Activated T-helper 1 cell treated with anti-CD3 and anti-CD28 coated beads, Interleukin-12 subunit alpha, Interleukin-12 subunit beta, Interleukin-2, Interleukin-4 antibody, amounts not matched to agents 30 ng/mL and 10 ng/mL and 1 ng/mL, durations not matched to agents 14 hours and 24 hours and 36 hours (primary cell): ENCODE measurements at regions of chr11 and their contacts with region 1.

Region 1: DNA sequence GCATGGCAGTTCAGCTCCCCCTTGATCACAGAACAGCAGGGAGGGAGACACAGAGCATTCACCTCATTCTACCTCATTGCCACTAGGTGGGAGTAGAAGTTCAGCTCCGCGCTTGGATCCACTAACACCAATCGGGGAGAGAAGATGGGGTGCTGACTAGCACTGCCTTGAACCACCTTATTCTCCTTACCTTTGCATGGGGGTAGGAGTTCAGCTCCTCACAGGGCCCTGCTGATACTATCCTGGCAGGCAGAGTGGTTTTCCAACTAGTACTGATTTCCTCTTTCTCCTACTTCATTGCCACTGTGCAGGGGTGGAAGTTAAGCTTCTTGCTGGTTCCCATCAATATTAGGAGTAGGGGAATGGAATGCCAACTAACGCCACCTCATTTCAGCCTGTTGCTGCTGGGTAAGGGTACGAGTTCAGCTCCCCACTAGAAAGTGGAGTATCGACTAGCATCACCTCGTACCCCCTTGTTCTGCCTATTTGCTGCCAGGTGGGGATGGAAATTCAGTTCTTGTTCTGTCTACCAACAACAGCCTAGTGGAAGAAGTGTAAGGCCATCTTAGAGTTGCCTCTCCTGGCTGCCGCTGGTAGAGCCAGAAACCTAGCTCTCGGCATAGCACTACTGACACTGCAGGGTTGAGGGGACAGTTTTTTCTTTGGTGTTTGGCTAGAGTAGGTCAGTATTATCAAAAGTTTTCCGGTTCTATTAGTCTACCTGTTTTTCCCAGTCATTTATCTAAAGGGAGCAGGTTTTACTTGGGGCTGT is 550.9 kb upstream of the CCDC90B start:
- DNase-seq: no peak
- H3K4me3 Mint-ChIP-seq: no peak overlapping the region
- H3K27ac Mint-ChIP-seq: no peak overlapping the region
- H3K4me1 Mint-ChIP-seq: no peaks in the 10 kb centered on the region
- H3K27me3 Mint-ChIP-seq: peaks cover 4% of the 10 kb centered on the region

Region 2: DNA sequence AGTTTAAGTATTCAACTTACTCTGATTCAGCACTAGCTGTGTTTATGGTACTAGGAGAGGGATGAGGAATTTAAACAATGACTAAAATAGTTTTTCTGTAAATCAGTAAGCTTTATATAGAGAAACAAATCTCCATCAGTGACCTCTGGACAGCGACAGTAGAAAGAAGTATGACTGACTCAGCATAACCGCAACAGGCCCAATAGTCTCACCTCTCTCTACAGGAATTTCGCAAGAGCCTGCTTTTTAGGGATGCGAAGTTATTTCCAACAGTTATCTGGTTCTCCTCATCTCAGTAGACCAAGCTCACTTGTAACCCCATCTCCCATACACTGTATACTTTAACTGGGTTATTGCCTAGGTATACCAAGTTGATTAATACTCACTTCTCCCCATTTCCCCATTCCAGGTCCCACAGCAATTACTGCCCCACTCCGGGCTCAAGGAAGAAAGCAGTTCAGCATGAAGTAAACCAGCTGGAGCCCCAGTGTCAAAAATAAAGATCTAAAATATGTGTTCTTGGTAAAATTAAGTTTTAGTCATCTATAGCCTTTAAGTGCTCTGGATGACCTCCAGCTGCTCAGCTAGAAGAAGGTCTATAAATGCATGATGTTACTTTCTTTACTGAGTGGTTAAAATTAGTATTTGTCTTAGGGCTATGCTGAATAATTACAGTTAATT is 219.8 kb after region 1 on chr11:
- intact Hi-C with region 1: no loop called
- DNase-seq: no peak
- H3K4me3 Mint-ChIP-seq: no peak overlapping the region
- H3K27ac Mint-ChIP-seq: no peak overlapping the region
- H3K4me1 Mint-ChIP-seq: no peaks in the 10 kb centered on the region
- H3K27me3 Mint-ChIP-seq: no peaks in the 10 kb centered on the region

Region 3: DNA sequence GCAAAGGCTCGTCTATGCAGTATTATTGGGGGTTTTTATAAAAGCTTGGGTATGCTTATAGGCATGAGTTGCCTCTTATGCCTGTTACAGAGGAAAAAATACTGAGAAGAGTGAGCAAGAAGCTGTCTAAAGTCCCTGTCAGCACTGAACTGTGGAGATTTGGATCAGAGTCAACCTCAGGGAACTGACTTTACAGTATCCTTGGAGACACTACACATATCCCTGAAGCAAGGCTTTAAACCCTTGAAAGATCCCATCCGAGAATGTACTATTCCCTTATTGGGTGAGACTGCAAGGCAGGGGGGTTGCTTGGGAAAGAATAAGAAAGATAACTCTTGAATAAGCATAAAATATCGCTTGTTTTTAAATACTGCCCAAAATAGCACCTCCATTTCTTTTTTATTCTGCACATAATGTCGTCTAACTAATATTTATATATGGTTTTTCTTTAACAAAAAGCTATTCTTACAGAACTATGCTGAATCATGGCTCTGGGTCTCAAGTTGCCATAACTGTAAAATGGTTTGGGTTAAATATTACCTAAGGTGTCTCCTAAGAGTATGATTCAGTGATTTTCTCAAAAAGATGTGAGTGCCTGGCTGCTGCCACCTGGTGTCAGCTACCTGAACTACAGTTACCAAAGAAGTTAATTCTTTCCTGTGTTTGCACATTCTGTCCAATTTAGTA is 727.3 kb after region 1 on chr11:
- intact Hi-C with region 1: loop called (anchors 2 kb)
- DNase-seq: no peak
- H3K4me3 Mint-ChIP-seq: no peak overlapping the region
- H3K27ac Mint-ChIP-seq: no peak overlapping the region
- H3K4me1 Mint-ChIP-seq: no peaks in the 10 kb centered on the region
- H3K27me3 Mint-ChIP-seq: no peaks in the 10 kb centered on the region